Activated CD8-positive, alpha-beta T cell treated with anti-CD3 and anti-CD28 coated beads, Interleukin-2, amount 10 ng/mL, durations not matched to agents 7 days and 5 days (primary cell): ENCODE measurements at regions of chr14 and their contacts with region 1.

Region 1: GRCh38 chr14:100645192-100645990 is 58.2 kb upstream of the BEGAIN start:
- DNase-seq: peak; percentile 92
- ATAC-seq: peak; percentile 89
- H3K4me3 Mint-ChIP-seq: peak overlapping the region; percentile 49
- H3K27ac Mint-ChIP-seq: peak overlapping the region; percentile 86
- H3K4me1 Mint-ChIP-seq: peaks cover 68% of the 10 kb centered on the region
- H3K27me3 Mint-ChIP-seq: peaks cover 13% of the 10 kb centered on the region

Region 2: DNA sequence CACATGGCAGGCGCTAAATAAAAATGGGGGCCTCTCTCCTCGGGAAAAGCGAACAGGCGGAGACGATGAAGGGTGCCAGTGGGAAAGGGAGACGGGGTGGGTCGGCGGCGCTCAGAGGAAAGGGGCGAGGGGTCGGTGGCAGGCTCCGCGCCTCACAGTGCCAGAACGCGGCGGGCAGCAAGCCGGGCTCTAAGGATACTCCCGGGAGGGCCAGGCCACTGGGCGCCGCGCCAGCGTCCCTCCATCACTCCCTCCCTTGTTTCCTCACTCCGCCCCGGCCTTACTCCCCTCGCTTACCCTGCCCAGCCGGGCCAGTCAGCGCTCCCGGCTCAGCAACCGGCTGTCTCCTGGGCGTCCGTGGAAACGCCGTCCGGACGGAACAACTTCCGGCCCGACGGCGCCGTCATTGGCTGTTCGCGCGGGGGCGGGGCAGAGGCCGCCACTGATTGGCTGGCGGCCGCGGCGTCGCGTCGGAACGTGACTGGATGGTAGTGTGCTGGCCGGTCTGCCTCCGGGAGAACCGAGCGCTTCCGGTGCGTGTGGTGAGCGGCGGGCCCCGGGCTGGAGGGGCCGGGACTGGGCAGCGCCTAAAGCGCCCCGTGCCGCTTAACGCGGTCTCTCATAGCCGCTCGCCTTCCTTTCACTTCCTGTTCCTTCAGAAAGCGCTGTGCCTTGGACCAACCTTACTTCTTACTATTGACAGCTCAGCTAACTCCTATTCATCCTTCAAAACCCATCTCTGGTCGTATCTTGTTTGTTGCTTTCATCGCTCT is 269.2 kb before region 1 on chr14:
- CTCF ChIA-PET with region 1: interaction called, 17 read pairs
- POLR2A ChIA-PET with region 1: no interaction called
- DNase-seq: peak; percentile 93
- ATAC-seq: peak; percentile 87
- H3K4me3 Mint-ChIP-seq: peak within 1 kb of the TSS; percentile 95
- H3K27ac Mint-ChIP-seq: peak within 1 kb of the TSS; percentile 96
- H3K4me1 Mint-ChIP-seq: peaks cover 50% of the 10 kb centered on the region
- H3K27me3 Mint-ChIP-seq: no peaks in the 10 kb centered on the region

Region 3: GRCh38 chr14:100400115-100400514 is 245.3 kb before region 1 on chr14:
- CTCF ChIA-PET with region 1: interaction called, 10 read pairs
- POLR2A ChIA-PET with region 1: no interaction called
- DNase-seq: no peak
- ATAC-seq: no peak
- H3K4me3 Mint-ChIP-seq: no peak overlapping the region
- H3K27ac Mint-ChIP-seq: no peak overlapping the region
- H3K4me1 Mint-ChIP-seq: peaks cover 8% of the 10 kb centered on the region
- H3K27me3 Mint-ChIP-seq: no peaks in the 10 kb centered on the region

Region 4: DNA sequence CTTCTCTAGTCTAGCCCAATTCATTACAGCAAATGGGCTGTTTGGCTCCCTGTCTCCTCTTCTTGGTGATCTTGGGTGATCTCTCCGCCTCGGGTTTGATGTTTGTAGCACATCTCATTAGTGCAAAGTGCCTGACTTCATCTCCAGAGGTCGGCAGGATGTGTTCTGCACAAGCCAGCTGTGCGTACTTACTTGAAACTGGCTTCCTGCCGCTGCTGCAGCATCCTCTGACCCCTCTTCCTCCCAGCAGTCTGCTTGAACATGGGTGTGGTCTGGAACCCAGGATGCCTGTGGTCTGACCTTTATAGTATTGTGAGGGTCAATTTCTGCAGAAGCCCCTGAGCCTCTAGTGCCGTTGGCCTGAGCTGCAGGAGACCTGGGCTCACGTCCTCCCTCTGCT is 157.3 kb before region 1 on chr14:
- CTCF ChIA-PET with region 1: interaction called, 10 read pairs
- POLR2A ChIA-PET with region 1: no interaction called
- DNase-seq: peak; percentile 62
- ATAC-seq: peak; percentile 54
- H3K4me3 Mint-ChIP-seq: peak overlapping the region; percentile 4
- H3K27ac Mint-ChIP-seq: peak overlapping the region; percentile 57
- H3K4me1 Mint-ChIP-seq: peaks cover 36% of the 10 kb centered on the region
- H3K27me3 Mint-ChIP-seq: no peaks in the 10 kb centered on the region

Region 5: DNA sequence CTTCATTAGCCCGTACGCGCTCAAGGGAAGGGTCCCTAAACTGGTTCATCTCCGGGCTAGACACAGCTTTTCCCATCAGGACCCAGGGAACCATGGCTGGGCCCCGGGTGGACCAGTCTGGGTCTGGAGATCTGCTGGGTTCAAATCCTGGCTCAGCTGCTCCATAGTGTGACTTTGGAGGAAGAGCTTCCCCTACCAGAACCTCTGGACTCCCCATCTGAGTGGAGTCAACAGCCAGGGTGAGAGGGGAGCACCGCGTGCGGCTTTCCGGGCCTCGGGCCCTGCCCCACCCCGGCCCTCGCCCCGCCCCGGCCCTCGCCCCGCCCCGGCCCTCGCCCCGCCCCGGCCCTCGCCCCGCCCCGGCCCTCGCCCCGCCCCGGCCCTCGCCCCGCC is 99.3 kb before region 1 on chr14:
- CTCF ChIA-PET with region 1: interaction called, 34 read pairs
- POLR2A ChIA-PET with region 1: interaction called, 4 read pairs
- DNase-seq: no peak
- ATAC-seq: peak; percentile 52
- H3K4me3 Mint-ChIP-seq: no peak overlapping the region
- H3K27ac Mint-ChIP-seq: peak overlapping the region; percentile 52
- H3K4me1 Mint-ChIP-seq: peaks cover 36% of the 10 kb centered on the region
- H3K27me3 Mint-ChIP-seq: peaks cover 4% of the 10 kb centered on the region

Region 6: GRCh38 chr14:100628225-100628624 is 17.2 kb before region 1 on chr14:
- CTCF ChIA-PET with region 1: interaction called, 17 read pairs
- POLR2A ChIA-PET with region 1: no interaction called
- DNase-seq: no peak
- ATAC-seq: no peak
- H3K4me3 Mint-ChIP-seq: no peak overlapping the region
- H3K27ac Mint-ChIP-seq: no peak overlapping the region
- H3K4me1 Mint-ChIP-seq: peaks cover 7% of the 10 kb centered on the region
- H3K27me3 Mint-ChIP-seq: peaks cover 33% of the 10 kb centered on the region

Region 7: DNA sequence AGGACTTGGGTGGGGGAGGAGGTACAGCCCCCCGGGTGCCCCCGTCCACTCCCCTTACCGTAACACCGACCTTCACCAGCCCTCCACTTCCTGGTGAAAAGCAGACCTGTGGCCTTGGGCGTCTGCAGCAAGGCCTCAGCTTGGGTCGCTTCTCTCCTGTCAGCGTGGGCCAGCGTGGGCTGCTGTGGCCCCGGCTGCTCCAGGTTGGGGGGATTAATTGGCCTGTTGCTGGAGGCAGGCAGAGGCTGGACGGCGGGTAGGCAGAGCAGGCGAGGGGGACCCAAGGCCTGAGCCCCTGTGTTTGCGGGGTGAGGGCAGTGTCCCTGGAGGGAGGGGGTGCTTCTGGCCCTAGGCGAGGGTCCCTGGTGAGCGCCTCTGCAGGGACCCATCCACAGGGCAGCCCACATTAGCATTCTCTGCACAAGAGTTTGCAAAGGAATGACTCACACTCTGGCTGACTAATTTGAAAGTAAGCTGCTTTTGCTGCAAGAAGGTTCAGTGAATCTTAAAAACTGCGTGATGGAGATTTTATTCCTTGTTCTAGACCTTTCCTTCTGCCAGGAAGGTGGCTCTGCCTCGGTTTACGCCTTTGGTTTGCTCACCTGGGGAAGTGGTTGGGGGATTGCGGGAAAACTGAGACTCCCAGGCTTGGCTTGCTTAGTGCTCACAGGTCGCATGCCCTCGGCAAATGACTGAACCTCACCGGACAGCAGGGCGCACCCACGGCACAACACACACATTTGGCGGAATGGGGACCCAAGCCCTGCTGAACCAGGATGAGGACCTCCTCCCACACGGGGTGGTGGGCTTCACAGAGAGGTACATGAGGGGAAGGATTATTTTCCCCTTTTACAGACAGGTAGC is 43.4 kb after region 1 on chr14:
- CTCF ChIA-PET with region 1: no interaction called
- POLR2A ChIA-PET with region 1: no interaction called
- DNase-seq: no peak
- ATAC-seq: no peak
- H3K4me3 Mint-ChIP-seq: no peak overlapping the region
- H3K27ac Mint-ChIP-seq: no peak overlapping the region
- H3K4me1 Mint-ChIP-seq: no peaks in the 10 kb centered on the region
- H3K27me3 Mint-ChIP-seq: no peaks in the 10 kb centered on the region